HepG2 (cell line): ENCODE measurements at regions of chr1 and their contacts with region 1.

Region 1: GRCh38 chr1:248793592-248793991 is 32.1 kb downstream of the SH3BP5L start:
- DNase-seq: no peak
- ATAC-seq: no peak
- H3K4me3 ChIP-seq: no peak overlapping the region
- H3K27ac ChIP-seq: no peak overlapping the region
- H3K4me1 ChIP-seq: 0 out of 2 replicates have a peak, but pooled peaks cover 4% of the 10 kb centered on the region
- H3K27me3 ChIP-seq: no peaks in the 10 kb centered on the region; a peak in 1 of 5 replicates
- CTCF ChIP-seq: no peak
- EP300 ChIP-seq: no peak
- POLR2A ChIP-seq: no peak
- RAD21 ChIP-seq: no peak

Region 2: DNA sequence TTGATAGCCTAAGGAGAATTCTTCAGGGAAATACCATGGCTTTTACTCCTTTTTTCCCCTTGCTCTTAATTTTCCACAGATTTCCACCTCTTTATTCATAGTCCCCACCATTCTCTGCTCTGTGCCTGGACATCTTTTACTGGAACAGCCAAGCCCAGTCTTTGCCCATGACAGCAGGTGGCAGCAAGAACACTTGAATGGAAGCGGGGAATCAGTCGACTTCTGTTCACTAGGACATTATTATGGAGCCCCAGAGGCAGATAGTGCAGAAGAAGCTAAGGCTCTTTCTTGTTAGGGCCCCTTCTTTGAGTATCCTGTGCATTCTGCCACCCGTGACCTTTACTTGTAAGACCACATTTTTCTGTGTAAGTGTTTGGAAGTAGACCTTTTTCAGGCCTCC is 97.3 kb before region 1 on chr1:
- CTCF ChIA-PET with region 1: no interaction called
- POLR2A ChIA-PET with region 1: no interaction called
- in situ Hi-C with region 1: no loop called
- intact Hi-C with region 1: loop called (anchors 5 kb)
- DNase-seq: peak; percentile 63
- ATAC-seq: peak; percentile 98
- H3K4me3 ChIP-seq: no peak overlapping the region
- H3K27ac ChIP-seq: no peak overlapping the region
- H3K4me1 ChIP-seq: no peaks in the 10 kb centered on the region
- H3K27me3 ChIP-seq: no peaks in the 10 kb centered on the region
- CTCF ChIP-seq: peak; percentile 79
- EP300 ChIP-seq: no peak
- POLR2A ChIP-seq: no peak
- RAD21 ChIP-seq: peak; percentile 65

Region 3: GRCh38 chr1:248757784-248758195 is 35.8 kb before region 1 on chr1:
- CTCF ChIA-PET with region 1: no interaction called
- POLR2A ChIA-PET with region 1: no interaction called
- in situ Hi-C with region 1: no loop called
- intact Hi-C with region 1: loop called (anchors 5 kb)
- DNase-seq: peak; percentile 89
- ATAC-seq: peak; percentile 93
- H3K4me3 ChIP-seq: peak overlapping the region in 2 of 3 experiments; percentile 33 to 48; a peak in 1 of 6 replicates
- H3K27ac ChIP-seq: peak overlapping the region; percentile 77
- H3K4me1 ChIP-seq: peaks cover 45% of the 10 kb centered on the region
- H3K27me3 ChIP-seq: no peaks in the 10 kb centered on the region
- CTCF ChIP-seq: no peak
- EP300 ChIP-seq: no peak
- POLR2A ChIP-seq: peak; percentile 22 to 29; a peak in 1 of 4 replicates
- RAD21 ChIP-seq: no peak

Region 4: DNA sequence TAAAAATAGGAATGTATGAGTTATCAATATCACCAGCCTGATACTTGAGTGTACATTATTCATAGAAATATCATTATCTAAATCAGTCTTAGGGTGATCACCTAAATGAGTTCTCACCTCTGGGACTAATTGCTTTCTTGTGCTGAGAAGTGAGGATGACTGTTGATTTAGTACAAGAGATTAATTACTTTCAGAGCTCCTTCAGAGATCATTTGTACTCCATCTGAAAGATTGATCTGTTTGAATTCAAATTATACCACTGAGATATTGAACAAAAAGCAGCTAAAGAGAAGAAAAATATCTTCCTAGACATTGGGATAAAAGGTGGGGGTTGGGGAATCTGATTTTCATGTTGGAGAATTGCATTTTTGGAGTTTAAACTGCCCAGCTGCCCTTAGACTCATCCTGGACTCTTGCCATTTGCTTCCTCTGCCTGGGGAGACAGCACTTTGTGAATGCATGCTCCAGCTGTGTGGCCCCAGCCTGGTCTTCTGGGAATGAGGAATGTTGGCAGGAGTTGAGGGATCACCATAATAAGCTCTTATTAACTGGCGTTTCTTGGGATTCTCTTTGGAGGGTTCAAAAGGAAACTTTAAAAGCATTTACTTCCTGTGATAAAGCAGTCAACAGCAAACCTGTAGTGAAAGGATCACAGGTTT is 92.8 kb after region 1 on chr1:
- CTCF ChIA-PET with region 1: no interaction called
- POLR2A ChIA-PET with region 1: no interaction called
- in situ Hi-C with region 1: no loop called
- intact Hi-C with region 1: no loop called
- DNase-seq: no peak
- ATAC-seq: no peak
- H3K4me3 ChIP-seq: no peak overlapping the region
- H3K27ac ChIP-seq: no peak overlapping the region
- H3K4me1 ChIP-seq: no peaks in the 10 kb centered on the region
- H3K27me3 ChIP-seq: no peaks in the 10 kb centered on the region; a peak in 1 of 5 replicates
- CTCF ChIP-seq: no peak
- EP300 ChIP-seq: no peak
- POLR2A ChIP-seq: no peak
- RAD21 ChIP-seq: no peak